ENCODE measurements at regions of chrX and their contacts with region 1.

Region 1: DNA sequence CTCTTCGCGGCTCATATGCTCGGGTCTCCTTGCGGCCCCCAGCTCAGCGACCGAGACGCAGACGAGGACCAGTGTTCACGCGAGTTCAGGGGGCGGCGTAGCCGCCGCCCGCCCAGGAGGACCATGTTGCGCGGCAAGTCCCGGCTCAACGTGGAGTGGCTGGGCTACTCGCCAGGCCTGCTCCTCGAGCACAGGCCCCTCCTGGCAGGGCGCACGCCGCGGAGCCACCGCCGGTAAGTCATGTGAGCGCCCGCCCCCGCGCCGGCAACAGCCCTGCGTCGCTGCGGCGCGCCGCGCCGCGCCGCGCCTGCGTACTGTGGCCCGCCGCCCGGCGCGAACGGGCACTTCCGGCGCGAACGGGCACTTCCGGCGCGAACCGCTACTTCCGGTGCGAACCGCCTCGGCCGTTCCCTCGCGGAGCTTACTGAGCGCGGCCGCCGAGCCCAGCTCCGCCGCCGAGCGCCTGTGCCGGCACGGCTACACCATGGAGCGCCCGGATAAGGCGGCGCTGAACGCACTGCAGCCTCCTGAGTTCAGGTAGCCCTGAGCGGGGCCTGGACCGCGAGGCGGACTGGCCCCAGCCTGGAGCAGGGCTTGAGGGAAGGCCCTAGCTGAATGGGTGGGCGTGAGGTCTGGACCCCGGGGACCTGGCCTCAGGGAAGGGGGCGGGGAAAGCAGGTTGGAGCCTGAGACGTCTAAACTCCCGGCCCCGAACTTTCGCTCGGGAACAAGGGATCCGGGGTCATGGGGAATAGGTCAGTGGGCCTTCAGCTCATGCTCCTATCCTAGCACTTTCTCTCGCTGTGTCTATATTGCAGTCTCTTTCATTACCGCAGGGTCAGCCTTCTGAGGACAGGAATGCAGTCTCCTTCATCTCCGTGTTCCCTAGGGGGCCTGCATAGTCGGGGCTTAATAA is at the start of gene VMA21:
- DNase-seq: peak; percentile 90
- ATAC-seq: peak; percentile 80
- H3K4me3 Mint-ChIP-seq: peak within 1 kb of the TSS; percentile 84
- H3K27ac Mint-ChIP-seq: peak within 1 kb of the TSS; percentile 94
- H3K4me1 Mint-ChIP-seq: peaks cover 49% of the 10 kb centered on the region
- H3K27me3 Mint-ChIP-seq: no peaks in the 10 kb centered on the region
- total RNA-seq, gene VMA21: 42.1 to 43.0 TPM

Region 2: GRCh38 chrX:150982788-150983520 is 414.1 kb before region 1 on chrX and contains the start of gene HMGB3:
- CTCF ChIA-PET with region 1: no interaction called
- POLR2A ChIA-PET with region 1: no interaction called
- intact Hi-C with region 1: loop called in 1 of 2 experiments (anchors 1 kb)
- DNase-seq: peak; percentile 91
- ATAC-seq: peak; percentile 99
- H3K4me3 Mint-ChIP-seq: peak within 1 kb of the TSS; percentile 66
- H3K27ac Mint-ChIP-seq: no peak within 1 kb of the TSS
- H3K4me1 Mint-ChIP-seq: peaks cover 4% of the 10 kb centered on the region
- H3K27me3 Mint-ChIP-seq: peaks cover 16% of the 10 kb centered on the region
- total RNA-seq, gene HMGB3: 26.5 to 29.3 TPM

Region 3: DNA sequence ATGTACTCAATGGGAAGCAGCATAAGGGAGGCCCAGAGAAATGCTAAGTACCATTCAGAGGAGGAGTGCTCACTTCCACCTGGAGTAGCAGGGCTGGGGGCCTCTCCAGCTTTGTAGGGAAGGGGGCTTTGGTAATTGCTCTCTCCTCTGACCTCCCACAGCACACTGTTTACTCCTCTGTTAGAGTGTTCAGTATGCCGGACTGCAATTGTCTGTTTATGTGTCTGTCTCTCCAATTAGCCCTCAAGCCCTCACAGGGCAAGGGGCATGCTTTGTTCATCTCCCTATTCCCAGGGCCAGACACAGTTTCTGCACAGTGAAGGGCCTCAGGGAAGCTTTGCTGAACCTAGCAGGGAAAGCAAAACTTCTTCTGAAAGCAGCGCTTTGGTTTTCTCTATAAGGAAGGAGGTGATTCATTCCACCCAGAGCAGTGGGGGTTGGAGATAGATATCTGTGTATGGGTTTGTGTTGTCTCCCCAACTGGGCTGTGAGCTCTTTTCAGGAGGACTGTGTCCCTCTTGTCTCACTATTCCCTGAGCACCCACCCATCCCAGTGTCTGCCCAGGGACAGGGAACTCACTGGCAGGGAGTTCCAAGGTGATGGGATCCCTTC is 50.0 kb before region 1 on chrX:
- CTCF ChIA-PET with region 1: no interaction called
- POLR2A ChIA-PET with region 1: no interaction called
- intact Hi-C with region 1: no loop called
- DNase-seq: no peak
- ATAC-seq: no peak
- H3K4me3 Mint-ChIP-seq: no peak overlapping the region
- H3K27ac Mint-ChIP-seq: no peak overlapping the region
- H3K4me1 Mint-ChIP-seq: no peaks in the 10 kb centered on the region
- H3K27me3 Mint-ChIP-seq: peaks cover 5% of the 10 kb centered on the region

Region 4: DNA sequence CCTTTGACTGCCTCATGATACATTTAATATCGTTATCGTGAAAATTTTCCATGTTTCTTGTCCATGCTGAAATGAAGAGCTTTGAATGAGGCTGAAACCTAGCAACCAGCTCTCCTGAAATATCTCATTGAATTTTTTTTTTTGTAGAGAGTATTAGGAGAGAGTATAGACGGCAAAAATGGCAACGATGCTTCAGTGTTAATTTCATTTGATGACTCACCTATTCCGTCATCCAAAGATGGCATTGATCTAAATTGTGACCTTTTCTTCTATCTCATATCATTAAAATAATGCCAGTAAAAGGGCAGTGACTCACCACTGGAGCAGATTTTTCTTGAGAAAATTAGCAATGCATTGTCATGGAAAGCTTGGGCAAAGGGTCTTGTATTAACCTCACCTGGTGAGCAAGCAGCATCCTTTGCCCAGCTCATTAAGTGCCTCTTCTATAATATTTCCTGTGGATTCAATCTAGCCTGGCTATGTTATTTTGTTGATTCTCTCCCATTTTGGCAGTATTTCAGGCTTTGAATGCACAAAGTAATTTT is 19.5 kb after region 1 on chrX:
- CTCF ChIA-PET with region 1: no interaction called
- POLR2A ChIA-PET with region 1: no interaction called
- intact Hi-C with region 1: loop called in 1 of 2 experiments (anchors 1 kb)
- DNase-seq: no peak
- ATAC-seq: peak; percentile 36
- H3K4me3 Mint-ChIP-seq: no peak overlapping the region
- H3K27ac Mint-ChIP-seq: peak overlapping the region; percentile 73
- H3K4me1 Mint-ChIP-seq: peaks cover 35% of the 10 kb centered on the region
- H3K27me3 Mint-ChIP-seq: no peaks in the 10 kb centered on the region

Region 5: DNA sequence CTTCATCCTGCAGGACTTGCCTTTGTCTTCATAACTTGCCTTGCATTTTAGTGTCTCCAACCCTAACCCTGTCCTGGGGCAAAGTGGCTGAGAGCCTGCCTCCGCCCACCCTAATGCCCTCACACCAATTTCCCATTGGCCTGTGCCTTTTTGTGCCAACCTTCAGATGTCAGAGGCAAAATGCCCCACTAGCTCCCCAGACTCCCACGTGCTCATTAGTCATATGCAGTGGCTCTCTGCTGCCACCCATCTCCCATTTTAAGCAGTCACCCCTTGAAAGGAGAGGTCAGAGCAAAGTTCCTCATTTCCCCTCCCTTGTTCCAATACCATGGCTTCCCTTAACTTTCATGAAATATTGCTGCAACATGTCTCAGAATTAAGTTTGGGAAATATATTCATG is 91.6 kb after region 1 on chrX:
- CTCF ChIA-PET with region 1: no interaction called
- POLR2A ChIA-PET with region 1: no interaction called
- intact Hi-C with region 1: no loop called
- DNase-seq: peak; percentile 35
- ATAC-seq: peak; percentile 55
- H3K4me3 Mint-ChIP-seq: no peak overlapping the region
- H3K27ac Mint-ChIP-seq: no peak overlapping the region
- H3K4me1 Mint-ChIP-seq: peaks cover 3% of the 10 kb centered on the region
- H3K27me3 Mint-ChIP-seq: no peaks in the 10 kb centered on the region

Region 6: DNA sequence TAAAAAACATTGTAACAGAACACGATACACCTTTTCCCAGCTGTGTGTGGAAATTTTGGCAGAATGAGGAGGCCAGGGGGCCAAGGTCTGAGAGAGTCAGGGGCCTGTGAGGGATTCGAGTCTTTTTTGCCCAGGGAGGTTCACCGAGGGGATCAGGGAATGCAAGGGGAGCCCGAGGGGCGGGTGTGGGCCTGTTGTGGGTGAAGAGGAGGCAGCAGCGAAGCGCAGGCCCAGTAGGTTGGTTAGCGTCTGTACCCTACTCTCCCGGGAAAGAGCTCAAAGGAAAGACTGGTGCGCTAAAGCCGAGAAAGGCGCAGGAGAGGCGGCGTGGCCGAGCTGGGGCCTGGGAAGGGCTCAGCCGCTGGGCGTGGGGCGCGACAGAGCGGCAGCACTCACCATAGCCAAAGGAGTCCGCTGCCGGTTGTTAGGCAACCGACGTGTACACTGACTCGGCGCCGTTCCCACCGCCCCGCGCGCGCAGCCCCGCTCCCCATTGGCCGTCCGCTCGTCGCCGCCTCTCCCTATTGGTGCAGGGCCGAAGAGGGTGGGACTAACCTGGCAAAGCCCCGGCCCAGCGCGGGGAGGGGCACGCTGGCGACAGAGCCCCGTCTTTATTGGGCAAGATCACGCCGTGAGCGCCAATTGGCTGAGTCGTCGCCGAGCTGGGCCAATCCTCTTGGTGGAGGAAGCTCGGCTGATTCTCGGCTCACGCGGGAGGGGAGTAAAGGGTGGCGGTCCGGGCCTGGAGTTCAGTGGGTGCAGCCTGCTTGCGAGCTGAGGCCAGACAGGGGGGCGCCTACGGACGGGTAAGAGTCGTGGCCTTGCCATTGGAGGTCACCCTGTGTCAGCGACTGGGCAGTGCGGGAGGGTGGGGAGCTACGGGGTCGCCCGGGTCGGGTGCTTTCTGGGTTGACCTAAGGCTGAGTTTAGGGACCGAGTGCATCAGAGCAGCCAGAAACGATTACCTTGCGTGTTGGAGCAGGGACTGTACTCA is 1433.5 kb after region 1 on chrX and contains the starts of genes CETN2 and NSDHL:
- CTCF ChIA-PET with region 1: no interaction called
- POLR2A ChIA-PET with region 1: no interaction called
- intact Hi-C with region 1: loop called (anchors 5 to 10 kb)
- DNase-seq: peak; percentile 96
- ATAC-seq: peak; percentile 99
- H3K4me3 Mint-ChIP-seq: peak within 1 kb of the TSS; percentile 83
- H3K27ac Mint-ChIP-seq: peak within 1 kb of the TSS; percentile 78
- H3K4me1 Mint-ChIP-seq: peaks cover 19% of the 10 kb centered on the region
- H3K27me3 Mint-ChIP-seq: no peaks in the 10 kb centered on the region
- total RNA-seq, gene CETN2: 11.2 to 13.1 TPM
- total RNA-seq, gene NSDHL: 20.0 to 20.6 TPM

Region 7: GRCh38 chrX:153333768-153334645 is 1936.9 kb after region 1 on chrX and contains the start of gene ZNF275:
- CTCF ChIA-PET with region 1: no interaction called
- POLR2A ChIA-PET with region 1: no interaction called
- intact Hi-C with region 1: loop called in 1 of 2 experiments (anchors 5 kb)
- DNase-seq: peak; percentile 87
- ATAC-seq: peak; percentile 93
- H3K4me3 Mint-ChIP-seq: peak within 1 kb of the TSS; percentile 80
- H3K27ac Mint-ChIP-seq: peak within 1 kb of the TSS; percentile 81
- H3K4me1 Mint-ChIP-seq: peaks cover 45% of the 10 kb centered on the region
- H3K27me3 Mint-ChIP-seq: no peaks in the 10 kb centered on the region
- total RNA-seq, gene ZNF275: 11.5 to 13.4 TPM

Measured in activated CD4-positive, alpha-beta T cell treated with anti-CD3 and anti-CD28 coated beads for 36 hours (primary cell).